ENCODE measurements at regions of chr19 and their contacts with region 1.

Region 1: GRCh38 chr19:5864725-5865486 is 5.4 kb downstream of the FUT5 start:
- DNase-seq: no peak
- ATAC-seq: no peak
- H3K4me3 ChIP-seq: no peak overlapping the region
- H3K27ac ChIP-seq: no peak overlapping the region
- H3K4me1 ChIP-seq: no peaks in the 10 kb centered on the region
- H3K27me3 ChIP-seq: no peaks in the 10 kb centered on the region
- CTCF ChIP-seq: peak; percentile 36; the same call in 1 of the 2 replicates

Region 2: DNA sequence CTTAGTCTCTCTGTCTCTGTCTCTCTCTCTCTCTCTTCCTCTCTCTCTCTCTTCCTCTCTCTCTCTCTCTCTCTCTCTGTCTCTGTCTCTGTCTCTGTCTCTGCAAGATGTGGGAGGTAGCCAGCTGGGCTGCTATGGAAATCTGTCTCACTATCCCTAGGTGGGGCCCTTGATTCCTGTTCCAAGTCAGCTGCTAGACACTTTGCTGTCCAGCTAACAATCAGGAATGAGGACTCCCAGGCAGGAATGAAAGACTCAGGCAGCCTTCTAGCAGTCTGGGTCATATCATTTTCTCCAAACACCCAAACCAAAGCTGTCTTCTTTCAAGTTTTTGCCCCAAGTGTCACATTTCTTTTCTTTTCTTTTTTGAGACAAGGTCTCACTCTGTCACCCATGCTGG is 121.3 kb before region 1 on chr19:
- CTCF ChIA-PET with region 1: interaction called, 13 read pairs
- POLR2A ChIA-PET with region 1: no interaction called
- intact Hi-C with region 1: no loop called
- DNase-seq: no peak
- ATAC-seq: no peak
- H3K4me3 ChIP-seq: no peak overlapping the region
- H3K27ac ChIP-seq: no peak overlapping the region
- H3K4me1 ChIP-seq: no peaks in the 10 kb centered on the region
- H3K27me3 ChIP-seq: no peaks in the 10 kb centered on the region
- CTCF ChIP-seq: no peak